Left lung (tissue), 14 donors: ENCODE measurements at regions of chr16 and their contacts with region 1.

Region 1: GRCh38 chr16:57899771-57900661 is 70.9 kb downstream of the CNGB1 start:
- DNase-seq: peak; percentile 55 to 89 (median 74)
- ATAC-seq: peak; percentile 81
- H3K4me3 ChIP-seq: no peak overlapping the region
- H3K27ac ChIP-seq: no peak overlapping the region
- H3K4me1 ChIP-seq: peaks cover 0 to 34% of the 10 kb centered on the region in 2 donors
- H3K27me3 ChIP-seq: peaks cover 0 to 24% of the 10 kb centered on the region in 2 donors
- CTCF ChIP-seq: peak; percentile 80 to 90

Region 2: GRCh38 chr16:58000706-58001676 is 101.0 kb after region 1 on chr16 and contains the start of gene USB1:
- intact Hi-C with region 1: loop called (anchors 5 to 10 kb)
- DNase-seq: peak; percentile 78 to 98 (median 88)
- ATAC-seq: peak; percentile 91
- H3K4me3 ChIP-seq: peak within 1 kb of the TSS; percentile 60 to 77
- H3K27ac ChIP-seq: peak within 1 kb of the TSS; percentile 90 to 97
- H3K4me1 ChIP-seq: peaks cover 15 to 54% of the 10 kb centered on the region in 2 donors
- H3K27me3 ChIP-seq: no peaks in the 10 kb centered on the region
- CTCF ChIP-seq: peak; percentile 64 to 69
- polyA plus RNA-seq, gene USB1: 21.5 to 29.6 (median 23.8) TPM